Prostate gland (tissue), 2 donors: ENCODE measurements at regions of chr5 and their contacts with region 1.

Region 1: DNA sequence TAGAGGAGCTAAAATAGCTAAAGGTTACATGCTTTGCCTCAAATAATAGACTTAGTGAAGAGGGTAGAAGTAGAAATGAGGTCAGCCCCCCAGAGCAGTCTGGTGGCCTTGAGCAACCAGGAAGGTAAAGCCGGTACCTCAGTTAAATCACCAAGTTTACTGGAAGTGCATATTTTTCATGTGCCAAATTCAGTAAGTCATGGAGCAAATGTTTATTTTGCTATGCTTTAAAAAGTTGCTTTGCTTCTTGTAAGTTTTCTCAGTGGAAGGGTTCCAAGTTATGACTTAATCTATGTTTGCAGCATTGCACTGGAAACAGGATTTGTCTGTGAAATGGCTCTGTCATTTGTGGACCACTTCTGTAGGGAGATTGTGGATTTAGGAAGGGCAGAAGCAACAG is 256.7 kb downstream of the ARRDC3 start:
- DNase-seq: peak; percentile 29
- H3K4me3 ChIP-seq: no peak overlapping the region
- H3K27ac ChIP-seq: peak overlapping the region; percentile 65 to 77
- H3K4me1 ChIP-seq: peaks cover 7% of the 10 kb centered on the region
- H3K27me3 ChIP-seq: no peaks in the 10 kb centered on the region
- CTCF ChIP-seq: no peak
- POLR2A ChIP-seq: no peak

Region 2: DNA sequence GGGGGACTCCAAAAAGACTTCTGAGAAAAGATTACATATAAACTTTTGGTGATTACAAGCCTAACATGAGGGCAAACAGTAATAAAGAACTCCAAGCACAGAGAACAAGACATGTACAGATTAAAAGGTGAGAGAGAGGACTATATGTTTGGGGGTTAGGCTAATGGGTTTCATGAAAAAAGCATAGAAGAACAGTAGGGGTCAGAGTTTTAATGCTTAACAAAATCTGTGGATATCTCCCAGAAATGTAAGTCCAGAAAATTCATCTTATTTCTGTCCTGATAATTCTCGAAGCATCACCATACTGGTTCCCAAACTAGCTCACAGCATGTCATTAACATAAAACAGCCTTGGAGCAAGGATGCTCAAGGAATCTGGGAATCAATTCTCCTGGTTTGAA is 119.4 kb after region 1 on chr5:
- intact Hi-C with region 1: no loop called
- DNase-seq: no peak
- H3K4me3 ChIP-seq: no peak overlapping the region
- H3K27ac ChIP-seq: no peak overlapping the region
- H3K4me1 ChIP-seq: no peaks in the 10 kb centered on the region
- H3K27me3 ChIP-seq: no peaks in the 10 kb centered on the region
- CTCF ChIP-seq: no peak
- POLR2A ChIP-seq: no peak

Region 3: DNA sequence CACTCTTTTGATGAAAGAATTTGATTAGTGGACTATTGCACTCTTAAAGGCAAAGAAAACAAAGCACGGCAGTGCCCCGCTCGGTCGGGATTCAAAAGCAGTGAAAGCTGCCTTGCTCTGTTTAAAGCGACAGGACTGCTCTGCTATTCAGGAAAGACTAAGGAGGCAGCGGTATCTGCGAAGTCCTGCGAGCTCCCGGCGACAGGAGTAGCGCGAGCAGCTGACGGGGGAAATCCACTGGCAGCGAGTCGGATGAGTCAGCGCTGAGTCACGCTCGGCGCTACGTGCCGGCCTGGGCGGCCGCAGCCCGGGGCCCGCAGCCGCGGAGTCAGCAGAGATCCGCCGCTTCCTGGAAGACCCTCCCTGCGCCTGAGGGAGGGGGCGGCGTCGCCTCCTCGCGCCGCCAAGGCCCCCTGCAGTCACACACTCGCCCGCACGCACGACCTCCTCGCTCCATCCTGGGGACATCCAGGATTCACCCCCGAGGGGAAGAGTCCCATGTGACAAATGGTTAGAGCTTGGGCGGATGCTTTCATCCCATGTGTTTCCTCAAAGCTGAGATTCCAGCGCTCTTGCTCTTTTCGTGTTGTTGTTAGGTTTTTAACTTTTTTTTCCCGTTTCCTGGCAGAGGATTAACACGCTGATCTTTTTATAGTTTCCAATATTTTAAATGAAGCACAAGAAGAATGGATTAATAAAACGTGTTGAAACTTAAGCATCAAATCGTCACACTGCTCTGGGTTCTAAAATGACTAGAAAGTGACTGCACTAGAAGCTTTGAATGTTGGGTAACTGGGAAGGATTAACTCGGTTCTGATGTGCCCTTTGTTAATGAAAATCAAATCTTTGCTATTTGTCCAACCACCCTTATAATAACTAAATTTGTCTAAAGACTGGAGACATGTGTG is 154.2 kb after region 1 on chr5:
- intact Hi-C with region 1: loop called (anchors 10 kb)
- DNase-seq: peak; percentile 91
- H3K4me3 ChIP-seq: peak overlapping the region; percentile 32 to 46
- H3K27ac ChIP-seq: peak overlapping the region; percentile 82 to 85
- H3K4me1 ChIP-seq: no peaks in the 10 kb centered on the region
- H3K27me3 ChIP-seq: no peaks in the 10 kb centered on the region
- CTCF ChIP-seq: peak in 2 of 4 experiments; percentile 22 to 24
- POLR2A ChIP-seq: peak; percentile 53